ENCODE measurements at regions of chr2 and their contacts with region 1.

Region 1: DNA sequence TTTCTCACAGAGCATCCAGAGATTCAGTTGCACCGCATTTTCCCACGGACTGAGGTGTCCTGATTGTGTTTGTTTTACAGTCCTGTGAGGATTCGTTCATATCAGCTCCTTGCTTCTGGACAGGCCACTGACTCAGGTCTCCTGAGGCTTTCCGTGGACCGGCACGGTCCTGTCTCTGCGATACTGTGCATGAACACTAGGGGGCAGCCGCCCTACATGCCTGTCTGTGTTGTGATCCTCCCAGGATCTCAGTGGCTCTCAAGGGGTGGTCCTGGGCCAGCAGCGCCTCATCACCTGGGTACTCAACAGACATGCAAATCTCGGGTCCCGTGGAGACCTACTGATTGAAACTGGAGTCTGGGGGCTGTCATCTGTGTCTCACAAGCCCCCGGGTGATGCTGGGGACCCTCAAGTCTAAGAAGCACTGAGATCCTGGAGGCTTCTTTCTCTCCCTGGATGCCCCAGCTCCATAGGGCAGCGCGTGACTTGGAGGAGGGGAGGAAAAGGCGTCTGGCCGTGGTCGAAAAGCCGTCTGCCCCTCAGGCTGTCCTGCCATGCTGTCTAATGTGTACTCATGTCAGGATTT is 28.9 kb downstream of the IL1R2 start:
- DNase-seq: peak; percentile 91
- H3K4me3 Mint-ChIP-seq: no peak overlapping the region
- H3K27ac Mint-ChIP-seq: peak overlapping the region; percentile 66
- H3K4me1 Mint-ChIP-seq: peaks cover 71% of the 10 kb centered on the region
- H3K27me3 Mint-ChIP-seq: peaks cover 2% of the 10 kb centered on the region

Region 2: DNA sequence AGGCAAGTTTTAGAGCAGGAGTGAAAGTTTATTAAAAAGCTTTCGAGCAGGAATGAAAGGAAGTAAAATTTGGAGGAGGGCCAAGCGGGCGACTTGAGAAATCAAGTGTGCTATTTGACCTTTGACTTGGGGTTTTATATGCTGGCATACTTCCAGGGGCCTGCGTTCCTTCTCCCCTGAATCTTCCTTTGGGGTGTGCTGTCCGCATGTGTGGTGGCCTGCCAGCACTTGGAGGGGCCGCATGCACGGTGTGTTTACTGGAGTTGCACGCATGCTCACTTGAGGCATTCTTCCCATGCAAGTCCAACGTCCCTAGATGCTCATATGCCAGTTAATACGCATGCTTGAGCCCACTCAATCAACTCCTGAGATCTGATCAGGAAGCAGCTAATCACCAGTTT is 401.5 kb before region 1 on chr2:
- CTCF ChIA-PET with region 1: no interaction called
- POLR2A ChIA-PET with region 1: no interaction called
- intact Hi-C with region 1: no loop called
- DNase-seq: no peak
- H3K4me3 Mint-ChIP-seq: no peak overlapping the region
- H3K27ac Mint-ChIP-seq: no peak overlapping the region
- H3K4me1 Mint-ChIP-seq: peaks cover 26% of the 10 kb centered on the region
- H3K27me3 Mint-ChIP-seq: no peaks in the 10 kb centered on the region

Region 3: DNA sequence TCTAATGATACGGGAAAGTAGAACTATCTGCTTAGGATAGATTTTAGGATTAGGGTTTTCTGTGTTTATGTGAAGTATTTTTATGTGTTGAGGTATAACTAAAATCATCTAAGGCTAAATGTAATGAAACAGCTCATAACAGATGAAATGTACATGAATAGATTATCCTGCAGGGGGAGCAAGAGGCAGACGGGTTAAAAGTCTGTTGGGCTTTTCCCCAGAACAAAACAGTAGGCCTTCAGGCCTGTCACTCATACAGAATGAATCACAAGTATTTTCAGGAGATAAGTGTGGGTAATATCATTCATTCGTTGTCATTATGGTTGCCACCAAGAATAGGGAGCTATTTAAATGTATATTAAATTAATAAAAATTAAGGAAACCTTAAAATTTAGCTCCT is 136.8 kb before region 1 on chr2:
- CTCF ChIA-PET with region 1: interaction called, 24 read pairs
- POLR2A ChIA-PET with region 1: no interaction called
- intact Hi-C with region 1: loop called (anchors 1 kb)
- DNase-seq: peak; percentile 60
- H3K4me3 Mint-ChIP-seq: no peak overlapping the region
- H3K27ac Mint-ChIP-seq: peak overlapping the region; percentile 2
- H3K4me1 Mint-ChIP-seq: peaks cover 21% of the 10 kb centered on the region
- H3K27me3 Mint-ChIP-seq: no peaks in the 10 kb centered on the region

Region 4: GRCh38 chr2:102033031-102033749 is 12.5 kb after region 1 on chr2:
- CTCF ChIA-PET with region 1: interaction called, 16 read pairs
- POLR2A ChIA-PET with region 1: no interaction called
- intact Hi-C with region 1: no loop called
- DNase-seq: peak; percentile 53
- H3K4me3 Mint-ChIP-seq: no peak overlapping the region
- H3K27ac Mint-ChIP-seq: peak overlapping the region; percentile 65
- H3K4me1 Mint-ChIP-seq: peaks cover 47% of the 10 kb centered on the region
- H3K27me3 Mint-ChIP-seq: no peaks in the 10 kb centered on the region

Region 5: GRCh38 chr2:102082571-102083392 is 62.1 kb after region 1 on chr2:
- CTCF ChIA-PET with region 1: interaction called, 5 read pairs
- POLR2A ChIA-PET with region 1: no interaction called
- intact Hi-C with region 1: loop called (anchors 2 kb)
- DNase-seq: peak; percentile 80
- H3K4me3 Mint-ChIP-seq: peak overlapping the region; percentile 57
- H3K27ac Mint-ChIP-seq: peak overlapping the region; percentile 92
- H3K4me1 Mint-ChIP-seq: peaks cover 64% of the 10 kb centered on the region
- H3K27me3 Mint-ChIP-seq: no peaks in the 10 kb centered on the region

Region 6: GRCh38 chr2:102138331-102138730 is 117.6 kb after region 1 on chr2:
- CTCF ChIA-PET with region 1: interaction called, 21 read pairs
- POLR2A ChIA-PET with region 1: no interaction called
- intact Hi-C with region 1: no loop called
- DNase-seq: no peak
- H3K4me3 Mint-ChIP-seq: no peak overlapping the region
- H3K27ac Mint-ChIP-seq: peak overlapping the region; percentile 70
- H3K4me1 Mint-ChIP-seq: peaks cover 59% of the 10 kb centered on the region
- H3K27me3 Mint-ChIP-seq: peaks cover 24% of the 10 kb centered on the region

Region 7: GRCh38 chr2:102187496-102188150 is 166.9 kb after region 1 on chr2:
- CTCF ChIA-PET with region 1: interaction called, 13 read pairs
- POLR2A ChIA-PET with region 1: no interaction called
- intact Hi-C with region 1: no loop called
- DNase-seq: peak; percentile 72
- H3K4me3 Mint-ChIP-seq: peak overlapping the region; percentile 81
- H3K27ac Mint-ChIP-seq: peak overlapping the region; percentile 83
- H3K4me1 Mint-ChIP-seq: peaks cover 19% of the 10 kb centered on the region
- H3K27me3 Mint-ChIP-seq: peaks cover 13% of the 10 kb centered on the region

Region 8: DNA sequence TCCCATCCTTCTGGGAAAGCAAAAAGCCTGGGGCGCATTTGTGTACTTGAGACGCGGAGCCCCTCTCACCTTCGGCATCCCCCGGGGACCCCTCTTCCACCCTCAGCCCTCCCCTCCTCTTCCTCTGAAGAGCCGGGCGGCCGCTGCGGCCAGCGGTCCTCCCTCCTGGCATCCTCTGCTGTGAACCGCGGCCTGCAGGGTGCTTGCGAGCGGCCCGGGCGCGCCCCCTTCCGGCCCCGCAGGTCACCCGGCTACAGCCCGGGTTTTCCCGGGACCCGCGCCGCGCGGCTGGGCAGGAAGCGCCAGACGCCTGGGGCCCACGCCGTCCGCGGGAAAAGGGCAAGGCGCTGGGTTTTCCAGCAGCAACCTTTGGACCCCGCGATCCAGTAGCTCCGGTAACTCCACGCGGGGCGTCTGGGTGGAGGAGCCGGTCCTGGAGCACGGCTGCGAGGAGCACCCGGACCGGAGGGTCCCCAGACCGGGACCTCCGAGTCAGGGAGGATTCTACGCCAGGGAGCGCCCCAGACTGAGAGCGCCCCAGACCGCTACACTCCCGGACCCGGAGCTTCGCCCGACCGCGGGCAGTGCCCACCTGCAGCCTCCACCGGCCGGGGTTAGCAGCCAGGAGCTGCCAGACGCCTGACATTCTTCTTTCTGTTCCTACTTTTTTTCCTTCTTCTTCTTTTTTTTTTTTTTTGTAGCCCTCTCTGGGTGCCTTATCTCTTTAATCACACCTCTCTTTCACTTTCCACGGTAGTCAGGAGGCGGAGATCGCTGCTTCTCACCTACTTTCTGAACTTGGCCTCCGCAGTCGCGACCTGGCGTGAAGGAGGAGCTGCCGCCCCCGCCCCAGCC is 335.1 kb after region 1 on chr2 and contains the start of gene IL18R1:
- CTCF ChIA-PET with region 1: interaction called, 4 read pairs
- POLR2A ChIA-PET with region 1: no interaction called
- intact Hi-C with region 1: loop called (anchors 5 kb)
- DNase-seq: peak; percentile 81
- H3K4me3 Mint-ChIP-seq: peak within 1 kb of the TSS; percentile 97
- H3K27ac Mint-ChIP-seq: peak within 1 kb of the TSS; percentile 89
- H3K4me1 Mint-ChIP-seq: peaks cover 45% of the 10 kb centered on the region
- H3K27me3 Mint-ChIP-seq: no peaks in the 10 kb centered on the region
- total RNA-seq, gene IL18R1: 25.5 to 26.6 TPM